OCI-LY7 (cell line): ENCODE measurements at regions of chr15 and their contacts with region 1.

Region 1: GRCh38 chr15:90691982-90692773 is 25.0 kb upstream of the BLM start:
- DNase-seq: no peak
- H3K4me3 ChIP-seq: no peak overlapping the region
- H3K27ac ChIP-seq: no peak overlapping the region
- H3K4me1 ChIP-seq: no peaks in the 10 kb centered on the region
- CTCF ChIP-seq: no peak

Region 2: GRCh38 chr15:90648137-90649070 is 43.8 kb before region 1 on chr15:
- CTCF ChIA-PET with region 1: no interaction called
- POLR2A ChIA-PET with region 1: no interaction called
- intact Hi-C with region 1: loop called (anchors 1 kb)
- DNase-seq: peak; percentile 84
- H3K4me3 ChIP-seq: no peak overlapping the region
- H3K27ac ChIP-seq: no peak overlapping the region
- H3K4me1 ChIP-seq: peaks cover 7% of the 10 kb centered on the region
- CTCF ChIP-seq: peak; percentile 97

Region 3: DNA sequence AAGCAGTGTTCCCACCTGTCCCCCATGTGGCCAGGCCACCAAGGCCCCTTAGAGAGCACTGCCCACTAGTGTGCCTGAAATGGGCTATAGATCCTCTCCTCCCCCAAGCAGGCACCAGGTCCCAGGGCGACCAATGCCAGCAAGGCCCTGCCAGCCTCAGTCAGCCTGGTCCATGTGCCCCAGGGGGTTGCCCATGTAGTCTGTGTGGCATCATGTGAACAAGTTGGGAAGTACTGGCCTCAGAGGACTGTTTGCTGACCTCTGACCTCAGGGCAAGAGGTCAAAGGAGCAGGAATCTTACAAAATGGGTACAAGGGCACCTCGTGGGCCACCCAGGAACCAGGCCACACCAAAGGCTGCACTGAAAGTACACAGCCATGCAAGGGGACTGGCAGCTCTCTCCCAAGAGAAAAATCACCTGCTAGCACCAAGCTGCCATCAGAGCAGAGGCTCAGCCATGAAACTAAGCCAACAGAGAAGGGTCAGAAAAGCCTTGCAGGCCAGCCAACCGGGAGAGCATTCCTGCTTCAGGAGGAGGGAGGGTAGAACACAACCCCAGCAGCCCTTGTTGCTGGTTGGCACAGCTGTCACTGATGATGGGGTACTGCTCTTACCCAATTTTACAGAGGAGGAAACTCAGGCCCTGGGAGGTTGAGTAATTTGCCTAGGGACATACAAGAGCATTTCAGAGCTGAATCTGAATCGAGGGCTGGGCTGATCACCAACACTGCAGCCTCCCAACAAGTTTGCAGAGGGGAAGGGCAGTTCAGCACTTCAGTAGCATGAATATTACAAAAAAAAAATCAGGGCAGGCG is 171.0 kb after region 1 on chr15:
- CTCF ChIA-PET with region 1: no interaction called
- POLR2A ChIA-PET with region 1: no interaction called
- intact Hi-C with region 1: no loop called
- DNase-seq: no peak
- H3K4me3 ChIP-seq: no peak overlapping the region
- H3K27ac ChIP-seq: no peak overlapping the region
- H3K4me1 ChIP-seq: no peaks in the 10 kb centered on the region
- CTCF ChIP-seq: no peak